A549 (cell line): ENCODE measurements at regions of chr18 and their contacts with region 1.

Region 1: DNA sequence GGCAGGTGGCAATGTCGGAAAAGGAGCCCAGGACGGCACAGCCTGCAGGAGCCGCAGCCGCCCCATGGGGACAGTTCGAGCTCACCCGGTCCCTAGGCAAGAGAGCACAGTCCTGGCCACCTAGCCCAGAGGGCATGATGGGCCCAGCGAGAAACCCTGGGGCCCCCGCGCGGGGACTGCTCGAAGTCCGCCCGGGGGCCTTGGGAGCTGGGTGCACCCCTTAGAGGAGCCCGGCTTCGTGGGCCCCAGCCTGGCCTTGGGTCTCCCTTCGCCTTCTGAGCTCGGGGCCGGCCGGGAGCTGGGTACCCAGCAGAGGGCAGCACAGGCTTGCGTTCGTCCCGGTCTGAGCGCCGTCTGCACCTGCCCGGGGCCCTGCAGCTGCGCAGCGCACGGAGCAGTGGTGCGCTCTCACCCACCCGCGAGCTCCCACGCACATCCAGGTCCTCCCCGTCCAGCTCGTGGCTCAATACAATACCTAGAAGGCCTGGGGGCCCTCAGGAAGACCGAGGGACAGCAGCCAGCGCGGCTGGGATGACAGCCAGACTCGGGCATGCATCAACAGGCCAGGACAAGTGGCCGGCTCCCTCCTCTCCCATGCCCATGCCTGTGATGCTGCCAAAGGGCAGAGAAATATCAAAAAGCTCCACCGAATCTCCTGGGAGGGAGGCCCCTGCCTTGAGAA is 96.2 kb upstream of the ZNF532 start:
- DNase-seq: peak; percentile 63 to 67
- ATAC-seq: peak; percentile 97 to 99
- H3K4me3 ChIP-seq: 0 out of 3 replicates have a peak overlapping the region, but pooled peaks have one; percentile 21
- H3K27ac ChIP-seq: peak overlapping the region; percentile 59 to 80
- H3K4me1 ChIP-seq: peaks cover 11% of the 10 kb centered on the region; the same call in 1 of the 3 replicates
- CTCF ChIP-seq: peak; percentile 72
- EP300 ChIP-seq: no peak
- POLR2A ChIP-seq: no peak
- RAD21 ChIP-seq: peak; percentile 87 to 95

Region 2: DNA sequence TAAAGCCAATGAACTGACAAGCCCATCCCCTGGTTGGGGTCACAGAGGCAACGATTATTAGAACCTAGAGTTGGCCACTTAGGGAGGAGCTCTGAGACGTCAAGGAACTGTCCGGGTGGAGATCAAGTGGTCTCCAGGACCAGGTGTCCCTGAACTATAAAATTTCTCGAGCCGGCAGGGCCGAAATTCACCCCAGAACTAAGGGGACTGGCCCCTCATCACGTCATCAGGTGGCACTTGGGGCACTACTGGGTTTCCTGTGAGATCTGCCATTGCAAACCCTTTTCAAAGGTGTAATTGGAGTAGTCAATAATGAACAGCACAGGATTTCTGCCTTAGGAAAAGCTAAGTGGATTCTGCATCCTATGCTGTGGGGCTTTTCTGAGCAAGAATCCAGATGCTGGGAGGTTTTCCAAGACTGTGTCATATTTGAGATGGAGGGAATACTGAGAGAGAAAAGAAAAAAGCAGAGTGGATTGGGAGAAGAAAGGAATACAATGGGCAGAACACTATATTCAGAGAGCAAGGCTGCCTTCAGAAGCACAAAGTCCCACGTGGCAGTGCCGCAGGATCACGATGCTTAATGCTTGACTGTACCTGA is 253.2 kb before region 1 on chr18:
- CTCF ChIA-PET with region 1: interaction called, 16 read pairs
- POLR2A ChIA-PET with region 1: no interaction called
- DNase-seq: no peak
- ATAC-seq: no peak
- H3K4me3 ChIP-seq: no peak overlapping the region
- H3K27ac ChIP-seq: no peak overlapping the region
- H3K4me1 ChIP-seq: no peaks in the 10 kb centered on the region
- CTCF ChIP-seq: no peak
- EP300 ChIP-seq: no peak
- POLR2A ChIP-seq: no peak
- RAD21 ChIP-seq: no peak

Region 3: GRCh38 chr18:58541145-58541788 is 227.2 kb before region 1 on chr18:
- CTCF ChIA-PET with region 1: interaction called, 11 read pairs
- POLR2A ChIA-PET with region 1: no interaction called
- DNase-seq: peak in 1 of 2 experiments; percentile 67
- ATAC-seq: peak in 1 of 2 experiments; percentile 51; a peak in 3 of 6 replicates
- H3K4me3 ChIP-seq: no peak overlapping the region
- H3K27ac ChIP-seq: peak overlapping the region; percentile 54 to 76; a peak in 5 of 6 replicates
- H3K4me1 ChIP-seq: peaks cover 71% of the 10 kb centered on the region
- CTCF ChIP-seq: peak; percentile 31; the same call in 2 of the 3 replicates
- EP300 ChIP-seq: no peak
- POLR2A ChIP-seq: no peak
- RAD21 ChIP-seq: peak; percentile 24 to 36; a peak in 1 of 5 replicates

Region 4: DNA sequence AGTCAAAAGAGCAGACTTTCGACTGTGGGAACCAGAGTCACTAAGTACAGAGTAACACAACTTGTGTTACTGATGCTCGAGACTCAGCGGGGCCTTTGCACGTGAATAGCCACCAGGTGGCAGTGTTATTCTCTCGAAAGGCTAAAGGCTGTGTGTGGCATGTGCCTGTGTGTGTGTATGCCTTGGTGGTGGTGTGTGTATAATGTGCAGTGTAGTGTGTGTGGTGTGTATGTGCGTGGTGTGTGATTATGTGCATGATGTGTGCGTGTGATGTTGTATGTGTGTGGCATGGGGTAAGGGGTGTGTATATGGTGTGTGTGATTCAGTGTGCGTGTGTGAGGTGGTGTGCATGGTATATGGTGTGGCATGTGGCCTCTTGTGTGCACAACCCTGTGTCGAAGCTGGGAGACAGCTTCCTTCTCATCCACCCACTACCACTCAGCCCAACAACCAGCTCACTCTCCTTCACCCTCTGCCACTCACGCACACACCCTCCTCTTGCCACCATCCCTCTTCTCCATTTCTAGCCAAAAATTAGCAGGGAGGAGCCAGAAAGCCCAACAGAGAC is 13.3 kb after region 1 on chr18:
- CTCF ChIA-PET with region 1: interaction called, 30 read pairs
- POLR2A ChIA-PET with region 1: no interaction called
- DNase-seq: peak; percentile 51 to 89
- ATAC-seq: peak; percentile 10 to 35; a peak in 3 of 6 replicates
- H3K4me3 ChIP-seq: no peak overlapping the region
- H3K27ac ChIP-seq: peak overlapping the region; percentile 98 to 99
- H3K4me1 ChIP-seq: peaks cover 38% of the 10 kb centered on the region
- CTCF ChIP-seq: peak; percentile 86
- EP300 ChIP-seq: no peak
- POLR2A ChIP-seq: no peak
- RAD21 ChIP-seq: peak; percentile 98

Region 5: DNA sequence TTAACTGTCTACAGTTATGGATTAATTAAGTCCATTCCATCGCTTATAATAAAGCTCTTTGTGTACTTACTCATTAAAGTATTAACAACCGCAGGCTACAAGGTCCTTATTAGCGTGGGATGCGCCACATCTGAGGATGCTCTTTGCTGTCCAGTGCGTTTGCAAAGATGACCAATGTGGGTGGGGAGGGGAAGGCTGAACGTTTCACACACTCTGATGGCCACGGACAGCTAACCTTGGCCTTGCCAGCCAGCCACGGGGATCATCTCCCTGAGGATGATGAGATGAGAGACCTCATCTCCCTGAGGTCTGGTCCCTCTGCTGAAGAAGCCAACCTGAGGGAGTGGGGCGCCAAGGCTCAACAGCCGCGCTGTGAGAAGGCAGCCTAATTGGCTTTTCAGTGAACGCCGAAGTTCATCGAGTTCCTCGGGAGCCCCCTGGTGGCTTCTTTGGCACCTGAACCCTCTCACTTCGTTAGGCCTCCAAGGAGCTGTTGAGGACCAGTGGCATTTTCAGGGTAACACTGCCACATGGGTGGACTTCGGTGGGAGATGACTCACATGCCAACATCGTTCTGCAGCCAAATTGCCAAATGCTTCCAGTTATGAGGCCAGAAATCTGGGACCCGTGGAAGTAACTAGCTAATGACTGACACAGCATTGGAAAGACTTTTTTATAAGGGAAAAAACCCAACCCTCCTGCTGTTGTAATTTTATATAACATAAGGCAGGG is 301.9 kb after region 1 on chr18:
- CTCF ChIA-PET with region 1: interaction called, 190 read pairs
- POLR2A ChIA-PET with region 1: no interaction called
- DNase-seq: peak; percentile 55 to 86
- ATAC-seq: peak; percentile 96
- H3K4me3 ChIP-seq: no peak overlapping the region
- H3K27ac ChIP-seq: peak overlapping the region; percentile 73 to 84
- H3K4me1 ChIP-seq: peaks cover 28% of the 10 kb centered on the region
- CTCF ChIP-seq: peak; percentile 74
- EP300 ChIP-seq: no peak
- POLR2A ChIP-seq: no peak
- RAD21 ChIP-seq: peak; percentile 90 to 94

Region 6: GRCh38 chr18:59402432-59403090 is 634.1 kb after region 1 on chr18:
- CTCF ChIA-PET with region 1: interaction called, 37 read pairs
- POLR2A ChIA-PET with region 1: no interaction called
- DNase-seq: peak; percentile 76 to 87
- ATAC-seq: peak; percentile 100
- H3K4me3 ChIP-seq: no peak overlapping the region
- H3K27ac ChIP-seq: no peak overlapping the region
- H3K4me1 ChIP-seq: no peaks in the 10 kb centered on the region
- CTCF ChIP-seq: peak; percentile 85
- EP300 ChIP-seq: no peak
- POLR2A ChIP-seq: no peak
- RAD21 ChIP-seq: peak; percentile 90 to 95

Region 7: GRCh38 chr18:59779966-59780365 is 1011.5 kb after region 1 on chr18:
- CTCF ChIA-PET with region 1: no interaction called
- POLR2A ChIA-PET with region 1: no interaction called
- DNase-seq: no peak
- ATAC-seq: peak in 1 of 2 experiments; percentile 23; a peak in 2 of 6 replicates
- H3K4me3 ChIP-seq: no peak overlapping the region
- H3K27ac ChIP-seq: peak overlapping the region; percentile 64 to 73; a peak in 5 of 6 replicates
- H3K4me1 ChIP-seq: peaks cover 21% of the 10 kb centered on the region; the same call in 2 of the 3 replicates
- CTCF ChIP-seq: no peak
- EP300 ChIP-seq: no peak
- POLR2A ChIP-seq: no peak
- RAD21 ChIP-seq: no peak